Activated CD4-positive, alpha-beta T cell treated with anti-CD3 and anti-CD28 coated beads, Interleukin-2, amount 10 ng/mL, durations not matched to agents 7 days and 5 days (primary cell): ENCODE measurements at regions of chr16 and their contacts with region 1.

Region 1: DNA sequence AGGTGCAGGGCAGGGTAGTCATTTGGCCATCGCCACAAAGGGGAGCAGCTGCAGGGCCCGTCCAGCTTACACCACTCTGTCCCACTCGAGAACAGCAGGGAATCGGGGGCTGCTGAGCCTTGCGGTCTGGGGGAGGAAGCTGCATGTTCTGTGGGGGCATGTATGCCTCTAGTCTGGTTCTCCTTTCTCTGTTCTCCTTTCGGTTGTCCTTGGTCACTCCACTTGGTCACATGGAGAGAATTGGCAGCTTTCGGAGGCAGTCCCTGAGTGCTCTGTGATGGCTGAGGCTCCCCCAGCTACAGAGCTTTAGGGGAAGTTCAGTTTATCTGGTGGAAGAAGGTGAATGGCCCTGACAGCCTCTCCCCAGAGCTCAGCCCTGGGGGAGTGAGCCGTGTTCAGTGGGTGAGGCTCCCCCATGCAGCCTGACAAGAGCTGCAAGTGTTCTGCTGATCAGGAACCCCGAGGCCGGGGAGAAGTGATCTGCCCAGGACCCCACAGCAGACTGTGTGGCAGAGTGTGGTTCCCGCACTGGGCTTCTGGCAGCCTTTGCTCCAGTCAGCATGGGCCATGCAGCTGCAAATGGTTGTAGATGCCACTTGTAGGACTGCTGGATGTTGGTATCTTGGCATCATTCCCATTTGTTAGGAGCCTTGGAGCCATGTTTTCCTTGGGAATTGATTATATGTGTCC is 22.3 kb upstream of the SMPD3 start:
- DNase-seq: no peak
- H3K4me3 Mint-ChIP-seq: peak overlapping the region; percentile 60
- H3K27ac Mint-ChIP-seq: peak overlapping the region; percentile 90
- H3K4me1 Mint-ChIP-seq: peaks cover 48% of the 10 kb centered on the region
- H3K27me3 Mint-ChIP-seq: peaks cover 8% of the 10 kb centered on the region

Region 2: DNA sequence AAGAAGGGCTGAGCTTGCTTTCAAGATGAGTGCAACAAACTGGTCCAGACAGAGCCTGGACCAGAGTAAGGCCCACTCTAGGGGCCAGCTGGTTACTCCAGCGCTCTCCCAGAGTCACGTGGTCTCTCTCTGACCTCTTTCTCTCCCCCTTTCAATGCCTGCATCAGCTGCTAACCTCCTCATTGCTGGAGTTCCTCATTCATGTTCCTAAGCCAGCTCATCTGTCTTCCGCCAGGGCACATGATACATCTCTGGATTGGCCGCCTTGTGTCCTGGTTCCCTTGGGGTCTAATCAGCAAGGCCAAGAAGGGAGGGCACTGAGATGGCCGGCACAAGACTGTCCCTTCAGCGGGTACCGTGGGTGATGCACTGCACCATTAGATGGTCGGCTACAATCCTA is 41.6 kb after region 1 on chr16:
- CTCF ChIA-PET with region 1: interaction called, 10 read pairs
- POLR2A ChIA-PET with region 1: no interaction called
- DNase-seq: no peak
- H3K4me3 Mint-ChIP-seq: no peak overlapping the region
- H3K27ac Mint-ChIP-seq: no peak overlapping the region
- H3K4me1 Mint-ChIP-seq: peaks cover 7% of the 10 kb centered on the region
- H3K27me3 Mint-ChIP-seq: peaks cover 16% of the 10 kb centered on the region